MCF 10A (cell line): ENCODE measurements at regions of chr12 and their contacts with region 1.

Region 1: GRCh38 chr12:116737774-116738700 is at the starts of genes RNFT2 and SPRING1:
- DNase-seq: peak; percentile 99
- H3K4me3 Mint-ChIP-seq: peak within 1 kb of the TSS; percentile 92
- H3K27ac Mint-ChIP-seq: peak within 1 kb of the TSS; percentile 61
- H3K4me1 Mint-ChIP-seq: peaks cover 13% of the 10 kb centered on the region
- H3K27me3 Mint-ChIP-seq: no peaks in the 10 kb centered on the region
- CTCF ChIP-seq: no peak
- total RNA-seq, gene RNFT2: 7.2 and 10.5 TPM in 2 replicates
- total RNA-seq, gene SPRING1: 26.2 and 37.1 TPM in 2 replicates

Region 2: GRCh38 chr12:116818948-116819832 is 81.2 kb after region 1 on chr12:
- CTCF ChIA-PET with region 1: no interaction called
- POLR2A ChIA-PET with region 1: interaction called, 3 read pairs
- intact Hi-C with region 1: loop called (anchors 2 kb)
- DNase-seq: peak; percentile 89
- H3K4me3 Mint-ChIP-seq: peak overlapping the region; percentile 81
- H3K27ac Mint-ChIP-seq: peak overlapping the region; percentile 96
- H3K4me1 Mint-ChIP-seq: peaks cover 7% of the 10 kb centered on the region
- H3K27me3 Mint-ChIP-seq: no peaks in the 10 kb centered on the region
- CTCF ChIP-seq: no peak

Region 3: DNA sequence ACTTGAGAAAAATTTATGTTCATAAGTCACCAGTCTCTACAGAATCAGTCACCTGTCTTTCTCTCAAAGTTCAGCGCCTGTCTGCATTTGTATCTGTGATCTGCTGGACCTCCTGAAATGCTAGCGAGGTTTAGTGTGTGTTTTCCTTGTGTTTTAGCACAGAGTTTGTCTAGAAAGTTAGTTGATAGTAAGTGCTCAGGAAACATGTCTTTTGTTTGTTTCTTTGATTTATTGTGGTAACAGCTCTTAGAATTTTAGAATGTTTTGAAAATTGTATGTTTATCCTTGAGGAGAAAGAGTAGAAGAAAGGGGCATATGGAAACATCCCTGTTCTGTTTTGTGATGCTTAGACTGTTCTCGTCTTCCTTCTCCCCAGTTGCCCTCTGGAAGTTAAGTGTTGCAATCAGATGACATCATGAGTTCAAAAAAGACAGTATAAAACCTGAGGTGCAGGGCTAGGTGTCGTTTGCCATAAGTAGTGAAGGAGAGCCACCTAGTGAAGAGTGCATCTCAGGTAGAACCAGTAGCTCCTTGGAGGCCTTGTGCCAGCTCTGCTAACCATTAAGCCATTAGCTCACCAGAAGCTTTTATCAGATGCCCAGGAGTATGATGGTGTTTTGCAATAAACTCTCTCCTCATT is 217.5 kb after region 1 on chr12:
- CTCF ChIA-PET with region 1: no interaction called
- POLR2A ChIA-PET with region 1: no interaction called
- intact Hi-C with region 1: loop called (anchors 5 kb)
- DNase-seq: peak; percentile 71
- H3K4me3 Mint-ChIP-seq: no peak overlapping the region
- H3K27ac Mint-ChIP-seq: no peak overlapping the region
- H3K4me1 Mint-ChIP-seq: no peaks in the 10 kb centered on the region
- H3K27me3 Mint-ChIP-seq: no peaks in the 10 kb centered on the region
- CTCF ChIP-seq: peak; percentile 24